PC-9 (cell line): ENCODE measurements at regions of chr3 and their contacts with region 1.

Region 1: GRCh38 chr3:31307131-31307785 is 225.5 kb upstream of the STT3B start:
- DNase-seq: no peak
- H3K4me3 ChIP-seq: no peak overlapping the region
- H3K27ac ChIP-seq: no peak overlapping the region
- H3K4me1 ChIP-seq: peaks cover 9% of the 10 kb centered on the region
- H3K27me3 ChIP-seq: no peaks in the 10 kb centered on the region
- CTCF ChIP-seq: no peak

Region 2: DNA sequence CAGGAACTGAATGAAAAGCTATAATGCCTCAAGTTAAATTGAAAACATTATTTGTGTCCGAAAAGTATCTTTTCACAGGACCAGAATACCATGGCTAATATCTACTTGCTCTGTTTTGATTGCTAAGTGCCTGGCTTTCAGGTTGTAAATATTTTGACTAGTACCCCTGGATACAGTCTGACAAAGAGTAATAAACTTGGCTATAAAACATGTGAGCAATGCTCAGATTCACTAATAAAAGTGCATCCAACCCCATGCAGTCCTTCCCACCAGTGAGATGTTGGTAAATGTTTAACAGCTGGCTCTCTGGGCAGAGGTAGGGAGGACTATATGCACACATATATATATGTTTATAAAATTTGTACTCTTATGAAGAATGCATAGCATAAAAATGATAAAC is 982.7 kb before region 1 on chr3:
- CTCF ChIA-PET with region 1: no interaction called
- POLR2A ChIA-PET with region 1: no interaction called
- intact Hi-C with region 1: no loop called
- DNase-seq: no peak
- H3K4me3 ChIP-seq: no peak overlapping the region
- H3K27ac ChIP-seq: no peak overlapping the region
- H3K4me1 ChIP-seq: no peaks in the 10 kb centered on the region
- H3K27me3 ChIP-seq: no peaks in the 10 kb centered on the region
- CTCF ChIP-seq: no peak

Region 3: GRCh38 chr3:31448035-31448881 is 141.0 kb after region 1 on chr3:
- CTCF ChIA-PET with region 1: no interaction called
- POLR2A ChIA-PET with region 1: no interaction called
- intact Hi-C with region 1: loop called (anchors 1 kb)
- DNase-seq: no peak
- H3K4me3 ChIP-seq: no peak overlapping the region
- H3K27ac ChIP-seq: no peak overlapping the region
- H3K4me1 ChIP-seq: peaks cover 18% of the 10 kb centered on the region
- H3K27me3 ChIP-seq: no peaks in the 10 kb centered on the region
- CTCF ChIP-seq: peak; percentile 51; the same call in 1 of the 2 replicates